MCF 10A (cell line): ENCODE measurements at regions of chr6 and their contacts with region 1.

Region 1: DNA sequence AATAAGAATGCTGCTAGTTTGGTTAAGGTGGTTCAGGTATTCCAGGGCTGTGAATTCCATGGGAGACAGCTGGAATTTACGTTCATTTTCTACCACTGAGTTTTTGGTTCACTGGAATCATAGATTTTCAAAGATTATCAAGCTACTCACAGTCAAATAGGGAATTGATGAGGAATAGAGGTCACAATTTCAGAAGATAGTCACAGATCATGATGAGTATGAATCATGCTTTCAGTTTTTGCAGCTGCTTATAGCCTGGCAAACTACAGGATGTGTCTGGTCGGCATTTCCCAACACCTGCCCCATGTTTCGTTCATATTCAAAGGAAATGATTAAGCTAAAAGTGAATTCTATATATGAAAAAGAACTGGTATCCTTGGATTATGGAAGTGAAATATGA is 58.7 kb downstream of the BCKDHB start:
- DNase-seq: peak; percentile 83
- H3K4me3 Mint-ChIP-seq: peak overlapping the region; percentile 6
- H3K27ac Mint-ChIP-seq: no peak overlapping the region
- H3K4me1 Mint-ChIP-seq: no peaks in the 10 kb centered on the region
- H3K27me3 Mint-ChIP-seq: no peaks in the 10 kb centered on the region
- CTCF ChIP-seq: no peak

Region 2: DNA sequence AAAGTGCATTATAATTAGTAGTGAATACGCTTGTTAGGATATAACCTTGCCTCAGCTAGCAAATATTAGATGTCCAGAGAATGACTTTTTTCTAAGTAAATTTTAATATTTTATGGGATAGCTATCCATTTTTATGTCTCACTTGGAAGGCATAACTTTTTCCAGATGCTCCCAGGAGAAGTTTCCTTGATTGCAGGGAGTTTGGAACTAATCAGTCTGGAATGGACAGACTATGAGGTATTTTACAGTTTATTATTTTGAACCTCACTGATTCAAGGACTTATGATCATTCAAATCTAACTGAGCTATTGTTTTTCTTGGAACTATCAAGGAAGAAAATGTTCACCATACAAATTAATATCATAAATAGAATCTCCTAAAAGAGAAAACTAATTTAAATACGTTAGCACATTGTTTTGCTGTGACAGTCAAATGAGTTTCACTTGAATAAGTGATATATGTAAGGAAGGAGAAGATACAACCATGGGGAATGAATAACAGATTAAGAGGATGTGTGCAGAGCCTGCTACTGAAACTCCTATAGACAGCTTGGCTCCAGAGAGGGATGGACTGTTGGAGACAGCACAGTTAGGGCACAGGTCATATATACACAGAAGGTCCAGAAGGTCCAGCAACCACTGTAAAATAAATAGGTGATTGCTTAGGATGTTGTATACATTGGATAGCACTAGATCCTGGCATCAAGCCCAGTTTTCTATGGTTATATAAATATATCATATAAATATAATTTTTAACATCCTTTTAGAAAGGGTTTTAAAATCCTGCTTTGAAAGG is 607.3 kb before region 1 on chr6:
- CTCF ChIA-PET with region 1: no interaction called
- POLR2A ChIA-PET with region 1: no interaction called
- intact Hi-C with region 1: no loop called
- DNase-seq: no peak
- H3K4me3 Mint-ChIP-seq: no peak overlapping the region
- H3K27ac Mint-ChIP-seq: no peak overlapping the region
- H3K4me1 Mint-ChIP-seq: no peaks in the 10 kb centered on the region
- H3K27me3 Mint-ChIP-seq: no peaks in the 10 kb centered on the region
- CTCF ChIP-seq: no peak

Region 3: DNA sequence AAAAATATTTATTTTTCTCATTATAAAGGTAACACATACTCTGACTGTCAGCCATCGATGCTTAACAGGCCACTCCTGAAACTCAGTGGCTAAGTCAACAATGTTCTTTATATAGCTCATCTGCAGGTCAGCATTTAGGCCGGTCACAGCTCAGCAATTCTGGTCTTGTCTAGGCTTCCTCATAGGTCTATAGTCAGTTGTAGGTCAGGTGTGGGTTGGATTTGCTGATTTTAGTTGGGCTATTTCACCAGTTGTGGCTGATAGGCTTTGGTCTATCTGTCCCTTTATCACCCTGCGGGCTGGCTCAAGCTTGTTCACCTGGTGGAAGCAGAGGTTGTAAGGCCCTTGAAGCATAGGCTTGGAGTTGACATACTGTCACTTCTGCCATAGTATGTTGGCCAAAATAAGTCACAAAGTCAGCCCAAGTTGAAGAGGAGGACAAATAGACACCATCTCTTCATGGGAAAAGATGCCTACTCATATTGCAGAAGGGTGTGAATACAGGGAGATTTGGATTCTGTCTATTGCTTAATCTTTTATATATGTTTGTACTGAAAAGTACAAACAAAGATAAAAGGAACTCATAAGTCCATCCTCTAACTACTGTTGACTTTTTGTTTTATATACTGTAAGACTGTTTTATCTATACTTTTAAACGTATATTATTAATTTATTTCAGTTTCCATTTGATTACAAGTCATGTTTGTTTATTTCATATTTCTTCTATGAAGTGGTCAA is 16.4 kb after region 1 on chr6:
- CTCF ChIA-PET with region 1: interaction called, 3 read pairs
- POLR2A ChIA-PET with region 1: interaction called, 6 read pairs
- intact Hi-C with region 1: loop called (anchors 2 kb)
- DNase-seq: peak; percentile 30
- H3K4me3 Mint-ChIP-seq: no peak overlapping the region
- H3K27ac Mint-ChIP-seq: peak overlapping the region; percentile 51
- H3K4me1 Mint-ChIP-seq: peaks cover 7% of the 10 kb centered on the region
- H3K27me3 Mint-ChIP-seq: no peaks in the 10 kb centered on the region
- CTCF ChIP-seq: no peak

Region 4: GRCh38 chr6:80263585-80263984 is 98.4 kb after region 1 on chr6:
- CTCF ChIA-PET with region 1: no interaction called
- POLR2A ChIA-PET with region 1: no interaction called
- intact Hi-C with region 1: no loop called
- DNase-seq: no peak
- H3K4me3 Mint-ChIP-seq: no peak overlapping the region
- H3K27ac Mint-ChIP-seq: no peak overlapping the region
- H3K4me1 Mint-ChIP-seq: no peaks in the 10 kb centered on the region
- H3K27me3 Mint-ChIP-seq: no peaks in the 10 kb centered on the region
- CTCF ChIP-seq: no peak